ENCODE measurements at regions of chr19 and their contacts with region 1.

Region 1: DNA sequence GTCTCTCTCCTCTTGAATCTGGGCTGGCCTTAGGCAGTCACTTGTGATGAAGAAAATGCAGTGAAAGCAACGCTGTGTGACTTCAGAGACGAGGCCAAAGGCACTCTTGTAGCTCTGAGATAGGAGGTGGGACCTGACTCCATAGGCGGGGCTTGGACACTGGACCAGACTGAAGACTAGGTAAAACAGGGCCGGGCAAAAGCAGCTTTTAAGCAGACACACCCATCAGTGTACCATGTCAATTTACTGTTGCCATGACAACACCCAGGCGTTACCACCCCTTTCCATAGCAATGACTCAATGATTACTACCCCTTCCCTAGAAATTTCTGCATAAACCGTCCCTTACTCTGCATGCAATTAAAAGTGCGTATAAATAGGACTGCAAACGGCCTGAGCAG is 6.6 kb upstream of the EID2 start:
- DNase-seq: no peak
- ATAC-seq: no peak
- H3K4me3 ChIP-seq: no peak overlapping the region
- H3K4me3 Mint-ChIP-seq: peak overlapping the region in 1 of 3 donors; percentile 40
- H3K27ac ChIP-seq: no peak overlapping the region
- H3K27ac Mint-ChIP-seq: peak overlapping the region; percentile 60 to 83
- H3K4me1 ChIP-seq: peaks cover 14 to 33% of the 10 kb centered on the region in 2 experiments
- H3K4me1 Mint-ChIP-seq: peaks cover 48 to 49% (median 48%) of the 10 kb centered on the region in 3 donors
- H3K27me3 ChIP-seq: no peaks in the 10 kb centered on the region
- H3K27me3 Mint-ChIP-seq: no peaks in the 10 kb centered on the region

Region 2: GRCh38 chr19:39445265-39446111 is 101.1 kb before region 1 on chr19 and contains the start of gene SUPT5H:
- CTCF ChIA-PET with region 1: no interaction called
- POLR2A ChIA-PET with region 1: interaction called in 1 of 2 experiments, 10 read pairs
- DNase-seq: peak; percentile 88 to 100 (median 98)
- ATAC-seq: peak; percentile 96 to 97 (median 97)
- H3K4me3 ChIP-seq: peak within 1 kb of the TSS; percentile 96 to 99
- H3K4me3 Mint-ChIP-seq: peak within 1 kb of the TSS; percentile 94 to 96 (median 96)
- H3K27ac ChIP-seq: peak within 1 kb of the TSS; percentile 91
- H3K27ac Mint-ChIP-seq: peak within 1 kb of the TSS; percentile 94 to 97
- H3K4me1 ChIP-seq: peaks cover 11 to 63% of the 10 kb centered on the region in 2 experiments
- H3K4me1 Mint-ChIP-seq: peaks cover 55 to 58% (median 58%) of the 10 kb centered on the region in 3 donors
- H3K27me3 ChIP-seq: no peaks in the 10 kb centered on the region
- H3K27me3 Mint-ChIP-seq: no peaks in the 10 kb centered on the region
- total RNA-seq, gene SUPT5H: 180 to 301 (median 194) TPM

Region 3: DNA sequence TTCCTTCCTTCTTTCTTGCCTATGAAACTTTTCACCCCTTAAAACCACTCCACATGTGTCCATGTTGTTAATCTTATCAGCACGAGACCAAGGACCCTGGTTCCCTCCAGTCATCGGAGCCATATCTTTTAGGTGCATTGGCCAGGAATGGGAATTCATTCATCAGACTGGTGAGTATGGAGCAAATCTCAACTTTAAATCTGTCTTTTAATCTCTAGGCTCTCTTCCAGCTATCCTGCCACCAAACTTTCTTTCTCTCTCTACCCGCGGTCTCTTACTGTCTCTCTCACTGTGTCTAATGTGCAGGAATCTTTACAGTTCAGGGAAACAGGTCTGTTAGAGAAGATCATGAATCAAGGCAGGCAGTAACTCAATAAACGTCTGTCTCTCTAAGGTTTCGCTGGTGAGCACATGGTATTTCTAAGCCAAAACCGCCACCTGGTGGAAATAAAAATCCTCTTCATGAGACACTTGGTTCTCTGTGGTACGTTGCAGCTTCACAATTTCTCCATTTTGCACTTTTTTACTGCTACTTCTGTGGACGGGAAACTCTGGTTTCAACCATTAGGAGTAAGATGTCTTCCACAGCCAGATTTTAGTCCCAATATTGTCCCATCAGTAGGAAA is 125.3 kb after region 1 on chr19:
- CTCF ChIA-PET with region 1: interaction called, 5 to 17 read pairs
- POLR2A ChIA-PET with region 1: no interaction called
- DNase-seq: peak in 29 of 35 experiments; percentile 9 to 79 (median 31)
- ATAC-seq: peak; percentile 74 to 92 (median 80)
- H3K4me3 ChIP-seq: no peak overlapping the region
- H3K4me3 Mint-ChIP-seq: peak overlapping the region in 1 of 3 donors; percentile 15
- H3K27ac ChIP-seq: no peak overlapping the region
- H3K27ac Mint-ChIP-seq: peak overlapping the region; percentile 57 to 80
- H3K4me1 ChIP-seq: peaks cover 0 to 9% of the 10 kb centered on the region in 2 experiments
- H3K4me1 Mint-ChIP-seq: peaks cover 28 to 37% (median 28%) of the 10 kb centered on the region in 3 donors
- H3K27me3 ChIP-seq: peaks cover 0 to 3% of the 10 kb centered on the region in 2 experiments
- H3K27me3 Mint-ChIP-seq: peaks cover 9 to 10% of the 10 kb centered on the region in 2 donors

Region 4: DNA sequence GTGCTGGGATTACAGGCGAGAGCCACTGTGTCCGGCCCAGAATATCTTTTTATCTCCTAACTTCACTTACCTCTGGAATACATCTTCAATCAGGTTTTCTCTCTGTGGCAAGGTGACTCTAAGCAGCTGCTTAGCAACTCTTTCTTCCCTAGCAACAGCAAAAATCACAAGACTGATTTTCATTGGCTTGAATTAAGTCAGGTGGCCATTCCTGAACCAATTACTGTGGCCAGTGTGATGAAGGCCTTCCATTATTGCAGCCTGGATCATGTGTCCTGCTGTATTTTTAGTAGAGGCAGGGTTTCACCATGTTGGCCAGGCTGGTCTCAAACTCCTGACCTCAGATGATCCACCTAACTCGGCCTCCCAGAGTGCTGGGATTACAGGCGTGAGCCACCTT is 1045.6 kb after region 1 on chr19:
- CTCF ChIA-PET with region 1: no interaction called
- POLR2A ChIA-PET with region 1: no interaction called
- DNase-seq: peak in 1 of 35 experiments; percentile 53
- ATAC-seq: peak in 3 of 4 experiments; percentile 28 to 78 (median 51)
- H3K4me3 ChIP-seq: no peak overlapping the region
- H3K4me3 Mint-ChIP-seq: no peak overlapping the region
- H3K27ac ChIP-seq: no peak overlapping the region
- H3K27ac Mint-ChIP-seq: no peak overlapping the region
- H3K4me1 ChIP-seq: peaks cover 0 to 21% of the 10 kb centered on the region in 2 experiments
- H3K4me1 Mint-ChIP-seq: peaks cover 6 to 13% (median 11%) of the 10 kb centered on the region in 3 donors
- H3K27me3 ChIP-seq: peaks cover 0 to 19% of the 10 kb centered on the region in 2 experiments
- H3K27me3 Mint-ChIP-seq: peaks cover 0 to 6% of the 10 kb centered on the region in 2 donors